Psoas muscle (tissue), 8 donors: ENCODE measurements at regions of chr3 and their contacts with region 1.

Region 1: GRCh38 chr3:113745273-113746068 is 578 bp downstream of the NAA50 start:
- DNase-seq: peak; percentile 67 to 86
- ATAC-seq: peak; percentile 76 to 80 (median 78)
- H3K4me3 ChIP-seq: peak overlapping the region; percentile 89
- H3K27ac ChIP-seq: peak overlapping the region; percentile 99
- H3K4me1 ChIP-seq: peaks cover 63% of the 10 kb centered on the region
- H3K27me3 ChIP-seq: no peaks in the 10 kb centered on the region
- CTCF ChIP-seq: peak; percentile 53

Region 2: DNA sequence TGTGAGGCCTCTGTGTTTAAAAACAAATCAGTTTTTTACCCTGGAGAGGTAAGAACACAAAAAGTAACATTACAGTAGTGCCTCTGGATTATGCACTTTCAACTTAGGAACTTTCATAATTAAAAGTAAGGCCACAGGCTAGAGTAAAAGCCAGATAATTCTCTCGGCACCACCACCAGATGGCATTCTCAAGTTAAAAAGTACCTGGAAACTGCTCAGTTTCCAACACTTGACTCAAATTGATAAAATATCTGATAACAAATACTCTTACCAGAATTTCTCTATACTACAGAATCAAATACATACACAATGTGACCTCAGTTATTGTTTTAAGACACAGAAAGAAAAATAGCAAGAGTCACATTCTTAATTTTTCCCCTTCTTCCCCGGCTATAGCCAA is 250.4 kb before region 1 on chr3:
- intact Hi-C with region 1: loop called in 1 of 2 experiments (anchors 5 kb)
- DNase-seq: no peak
- ATAC-seq: peak; percentile 61 to 94 (median 66)
- H3K4me3 ChIP-seq: no peak overlapping the region
- H3K27ac ChIP-seq: no peak overlapping the region
- H3K4me1 ChIP-seq: no peaks in the 10 kb centered on the region
- H3K27me3 ChIP-seq: no peaks in the 10 kb centered on the region
- CTCF ChIP-seq: peak; percentile 61

Region 3: DNA sequence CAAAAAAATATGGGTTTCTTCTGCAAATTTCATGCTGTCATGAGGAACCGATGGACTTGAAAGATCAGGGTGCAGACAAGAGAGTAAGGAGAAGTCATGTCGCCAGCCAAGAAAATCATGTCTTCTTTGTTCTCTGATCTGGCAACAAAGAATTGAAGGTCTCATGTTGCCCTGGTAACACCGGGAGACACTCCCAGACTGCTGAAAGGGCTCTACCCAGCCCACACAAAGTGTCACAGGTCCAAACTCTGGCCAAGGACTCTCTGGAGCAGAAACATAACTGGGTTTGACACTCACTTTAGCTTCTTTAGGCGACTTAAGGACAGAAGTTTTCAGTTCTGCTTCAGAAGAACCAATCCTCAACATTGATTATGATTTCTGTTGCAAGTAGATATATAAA is 170.3 kb before region 1 on chr3:
- intact Hi-C with region 1: loop called in 1 of 2 experiments (anchors 5 kb)
- DNase-seq: no peak
- ATAC-seq: no peak
- H3K4me3 ChIP-seq: no peak overlapping the region
- H3K27ac ChIP-seq: no peak overlapping the region
- H3K4me1 ChIP-seq: no peaks in the 10 kb centered on the region
- H3K27me3 ChIP-seq: no peaks in the 10 kb centered on the region
- CTCF ChIP-seq: no peak

Region 4: DNA sequence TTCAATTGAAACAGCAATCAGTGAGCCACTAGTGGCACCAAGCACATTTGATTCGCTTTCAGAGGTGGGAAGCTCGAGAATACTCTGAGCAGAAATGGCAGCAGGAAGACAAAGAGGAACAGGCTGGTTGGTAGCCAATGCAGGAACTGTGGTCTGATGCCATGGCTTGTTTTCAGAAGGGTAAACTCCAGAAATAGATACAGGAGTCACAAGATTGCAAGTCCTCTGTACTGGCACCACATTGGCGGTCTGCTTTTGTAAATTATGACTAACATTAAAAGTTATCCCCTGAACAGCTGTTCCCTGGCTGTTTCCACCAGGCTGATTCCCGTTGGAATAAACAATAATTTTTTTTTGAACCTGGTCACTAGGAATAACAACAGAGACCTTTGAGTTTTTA is 84.6 kb before region 1 on chr3:
- intact Hi-C with region 1: loop called in 1 of 2 experiments (anchors 10 kb)
- DNase-seq: peak; percentile 23 to 62
- ATAC-seq: peak; percentile 94 to 96 (median 96)
- H3K4me3 ChIP-seq: peak overlapping the region; percentile 38
- H3K27ac ChIP-seq: peak overlapping the region; percentile 85
- H3K4me1 ChIP-seq: peaks cover 39% of the 10 kb centered on the region
- H3K27me3 ChIP-seq: no peaks in the 10 kb centered on the region
- CTCF ChIP-seq: no peak

Region 5: DNA sequence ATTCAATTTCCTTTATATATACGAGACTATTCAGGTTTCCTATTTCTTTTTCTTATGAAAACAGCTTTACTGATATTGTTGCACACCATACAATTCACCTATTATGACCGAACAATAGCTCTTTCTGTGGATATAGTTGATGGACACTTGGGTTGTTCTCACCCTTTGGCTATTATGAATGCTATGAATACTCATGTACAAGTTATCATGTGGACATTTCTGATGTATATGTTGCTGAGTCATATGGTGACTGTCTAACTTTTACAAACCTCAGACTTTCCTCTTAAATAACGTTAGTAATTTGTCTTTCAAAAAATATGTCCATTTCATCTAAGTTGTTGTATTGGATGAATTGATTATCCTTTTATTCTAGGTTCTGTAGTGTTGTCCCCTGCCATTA is 33.3 kb before region 1 on chr3:
- intact Hi-C with region 1: no loop called
- DNase-seq: no peak
- ATAC-seq: no peak
- H3K4me3 ChIP-seq: no peak overlapping the region
- H3K27ac ChIP-seq: no peak overlapping the region
- H3K4me1 ChIP-seq: peaks cover 8% of the 10 kb centered on the region
- H3K27me3 ChIP-seq: no peaks in the 10 kb centered on the region
- CTCF ChIP-seq: no peak

Region 6: DNA sequence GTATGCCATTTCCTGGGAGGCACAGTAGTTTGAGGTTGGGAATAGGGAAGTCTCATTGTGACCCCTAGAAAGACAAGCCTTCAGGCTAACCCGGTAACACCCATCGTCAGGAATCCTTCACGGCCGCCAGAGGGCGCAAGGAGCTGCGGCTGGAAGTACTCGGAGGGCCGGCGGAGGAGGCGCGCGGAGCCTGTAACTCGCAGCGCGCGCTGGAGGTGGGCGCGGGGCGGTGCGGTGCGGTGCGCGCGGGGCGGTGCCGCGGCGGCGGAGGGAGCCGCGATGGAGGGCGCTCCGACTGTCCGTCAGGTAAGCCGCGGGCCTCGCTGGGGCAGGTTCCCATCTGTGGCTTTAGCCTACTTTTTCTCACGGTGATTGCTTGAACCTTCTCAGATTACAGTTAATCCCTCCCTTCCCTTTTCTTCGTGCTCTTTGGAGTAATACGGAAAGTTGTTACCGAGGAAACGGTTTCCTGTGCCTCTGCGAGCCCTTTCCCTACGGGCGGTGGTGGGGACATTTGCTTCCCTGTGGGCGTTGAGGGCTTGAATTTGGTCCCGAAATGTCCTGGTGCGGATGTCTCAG is 93.2 kb after region 1 on chr3 and contains the start of gene GRAMD1C:
- intact Hi-C with region 1: loop called in 1 of 2 experiments (anchors 5 kb)
- DNase-seq: peak; percentile 86 to 91
- ATAC-seq: peak; percentile 94 to 100 (median 96)
- H3K4me3 ChIP-seq: peak within 1 kb of the TSS; percentile 67
- H3K27ac ChIP-seq: no peak within 1 kb of the TSS
- H3K4me1 ChIP-seq: no peaks in the 10 kb centered on the region
- H3K27me3 ChIP-seq: no peaks in the 10 kb centered on the region
- CTCF ChIP-seq: peak; percentile 84
- total RNA-seq, gene GRAMD1C: 0.53 to 0.81 (median 0.65) TPM

Region 7: GRCh38 chr3:114231616-114232015 is 486.1 kb after region 1 on chr3:
- intact Hi-C with region 1: no loop called
- DNase-seq: no peak
- ATAC-seq: no peak
- H3K4me3 ChIP-seq: no peak overlapping the region
- H3K27ac ChIP-seq: no peak overlapping the region
- H3K4me1 ChIP-seq: no peaks in the 10 kb centered on the region
- H3K27me3 ChIP-seq: no peaks in the 10 kb centered on the region
- CTCF ChIP-seq: no peak